ENCODE measurements at regions of chr2 and their contacts with region 1.

Region 1: GRCh38 chr2:210399440-210400041 is 77.0 kb downstream of the LANCL1 start:
- DNase-seq: peak; percentile 28
- H3K4me3 Mint-ChIP-seq: no peak overlapping the region
- H3K27ac Mint-ChIP-seq: no peak overlapping the region
- H3K4me1 Mint-ChIP-seq: no peaks in the 10 kb centered on the region
- H3K27me3 Mint-ChIP-seq: peaks cover 40% of the 10 kb centered on the region
- CTCF ChIP-seq: peak; percentile 27

Region 2: DNA sequence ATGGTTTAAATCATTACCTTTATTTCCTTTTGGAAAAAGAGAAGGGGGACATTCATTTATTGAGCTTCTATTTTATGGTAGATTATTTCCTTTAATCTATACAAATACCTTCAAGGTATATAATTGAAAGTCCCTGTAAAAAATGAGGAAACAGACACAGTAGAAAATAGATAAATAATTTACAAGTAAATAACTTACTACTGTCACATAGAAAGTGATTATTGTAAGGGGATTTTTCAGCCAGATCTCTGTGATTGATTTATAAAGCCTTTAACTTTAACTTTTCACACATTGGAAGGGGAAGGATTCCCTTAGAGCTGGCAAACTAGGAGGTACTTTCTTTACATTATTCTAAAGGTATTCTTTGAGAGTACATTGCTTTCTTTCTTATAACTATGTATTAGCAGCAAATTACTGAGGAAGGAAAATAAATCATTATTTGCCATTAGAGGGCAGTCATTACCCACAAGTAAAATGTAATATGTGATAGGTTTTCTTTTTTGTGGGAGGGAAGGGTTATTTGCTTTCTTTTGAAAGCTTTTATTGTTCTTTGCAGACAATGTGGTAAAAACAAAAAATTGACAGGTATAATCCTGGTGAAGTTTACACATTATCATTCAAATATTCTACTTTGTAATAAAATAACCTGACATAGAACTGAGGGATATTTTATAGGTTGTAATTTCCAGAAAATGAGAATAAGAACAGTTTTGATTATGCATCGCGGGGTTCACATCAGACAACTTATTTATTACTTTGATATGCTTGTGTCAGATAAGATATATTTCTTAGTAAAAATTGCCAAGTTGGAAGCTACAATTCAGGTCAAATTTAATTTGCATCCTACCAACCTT is 421.9 kb before region 1 on chr2:
- CTCF ChIA-PET with region 1: interaction called, 6 read pairs
- POLR2A ChIA-PET with region 1: no interaction called
- intact Hi-C with region 1: loop called (anchors 10 kb)
- DNase-seq: peak; percentile 47
- H3K4me3 Mint-ChIP-seq: no peak overlapping the region
- H3K27ac Mint-ChIP-seq: no peak overlapping the region
- H3K4me1 Mint-ChIP-seq: no peaks in the 10 kb centered on the region
- H3K27me3 Mint-ChIP-seq: no peaks in the 10 kb centered on the region
- CTCF ChIP-seq: peak; percentile 39

Region 3: GRCh38 chr2:210363271-210363670 is 36.3 kb before region 1 on chr2:
- CTCF ChIA-PET with region 1: interaction called, 30 read pairs
- POLR2A ChIA-PET with region 1: no interaction called
- intact Hi-C with region 1: no loop called
- DNase-seq: peak; percentile 14
- H3K4me3 Mint-ChIP-seq: no peak overlapping the region
- H3K27ac Mint-ChIP-seq: no peak overlapping the region
- H3K4me1 Mint-ChIP-seq: no peaks in the 10 kb centered on the region
- H3K27me3 Mint-ChIP-seq: no peaks in the 10 kb centered on the region
- CTCF ChIP-seq: peak; percentile 11

Region 4: GRCh38 chr2:210410542-210410941 is 11.0 kb after region 1 on chr2:
- CTCF ChIA-PET with region 1: interaction called, 12 read pairs
- POLR2A ChIA-PET with region 1: no interaction called
- intact Hi-C with region 1: no loop called
- DNase-seq: no peak
- H3K4me3 Mint-ChIP-seq: no peak overlapping the region
- H3K27ac Mint-ChIP-seq: no peak overlapping the region
- H3K4me1 Mint-ChIP-seq: no peaks in the 10 kb centered on the region
- H3K27me3 Mint-ChIP-seq: peaks cover 64% of the 10 kb centered on the region
- CTCF ChIP-seq: no peak

Measured in MCF 10A (cell line).